ENCODE measurements at regions of chr15 and their contacts with region 1.

Region 1: GRCh38 chr15:50044406-50044805 is 74.6 kb downstream of the ATP8B4 start:
- DNase-seq: no peak

Region 2: DNA sequence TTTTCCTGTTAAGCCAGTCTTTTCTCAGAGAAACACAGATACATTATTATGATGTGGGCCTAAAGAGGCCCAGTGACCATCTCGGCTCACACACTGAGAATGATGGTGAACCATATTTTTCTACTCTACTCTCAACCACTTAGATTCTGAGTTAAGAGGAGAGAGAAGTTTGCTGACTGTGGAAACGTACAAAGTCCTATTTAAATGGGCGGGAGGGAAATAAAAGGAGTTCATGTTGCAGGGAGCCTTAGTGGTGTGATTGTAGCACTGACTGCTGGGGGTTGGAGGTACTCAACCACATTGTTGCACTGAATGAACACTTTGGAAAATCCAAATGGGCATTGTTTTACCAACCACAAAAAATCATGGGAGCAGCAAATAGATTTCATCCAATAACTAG is 23.6 kb after region 1 on chr15:
- intact Hi-C with region 1: loop called (anchors 2 kb)
- DNase-seq: no peak